ENCODE measurements at regions of chr5 and their contacts with region 1.

Region 1: DNA sequence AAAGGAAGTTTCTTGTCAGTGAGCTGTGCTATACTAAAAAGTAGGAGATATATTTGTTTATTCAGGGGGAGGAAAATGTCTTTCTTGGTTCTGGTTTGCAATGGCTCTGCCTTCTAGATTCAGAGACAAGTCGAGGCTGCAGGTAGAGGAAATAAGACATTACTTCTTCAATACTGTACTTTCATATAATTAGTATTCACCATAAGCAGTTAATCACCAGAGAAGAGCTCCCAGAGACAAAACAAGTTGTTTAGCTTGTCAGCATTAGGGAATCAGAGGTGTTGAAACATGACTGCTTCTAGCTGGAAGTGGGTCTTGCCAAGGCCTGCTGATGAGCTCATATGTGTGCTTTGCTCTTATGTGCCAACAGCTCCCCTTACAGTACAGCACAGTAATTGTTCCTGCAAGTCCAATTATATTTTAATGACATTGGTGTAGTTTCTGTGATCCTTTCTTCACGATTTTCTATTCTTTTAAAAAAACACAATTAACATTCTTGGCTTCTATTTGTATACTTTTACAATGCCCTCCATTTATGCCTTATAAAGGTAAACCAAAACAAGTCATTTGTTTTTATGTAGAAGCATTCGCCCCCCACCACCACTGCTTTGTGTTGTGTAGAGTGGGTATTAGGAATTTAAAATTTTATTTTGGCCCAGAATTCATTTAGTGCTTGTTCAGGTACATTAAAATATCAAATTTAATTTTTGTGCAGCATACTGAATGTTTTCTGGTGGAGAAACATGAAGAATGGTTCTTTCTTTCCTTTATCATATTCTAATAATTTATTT is 112.2 kb downstream of the RPS23 start:
- DNase-seq: peak in 9 of 10 donors; percentile 23 to 86 (median 59)

Region 2: DNA sequence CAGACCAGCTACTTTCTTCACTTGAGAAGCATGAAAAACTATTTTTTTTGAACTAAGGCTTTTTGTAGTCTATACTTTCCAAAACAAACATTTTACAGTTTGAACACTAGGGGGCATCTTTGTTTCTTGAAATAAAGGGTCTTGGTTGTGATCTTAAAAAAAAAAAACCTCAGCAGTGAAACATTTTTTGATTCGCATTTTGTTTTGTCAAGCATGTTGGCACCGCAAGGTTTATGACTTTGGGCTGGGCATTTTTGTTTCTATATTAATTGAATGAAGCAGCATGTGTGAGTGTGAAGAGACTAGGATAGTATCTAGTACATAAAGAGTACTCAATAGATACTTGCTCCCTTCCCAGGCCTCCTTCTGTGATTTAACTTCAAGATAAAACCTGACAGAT is 740.4 kb before region 1 on chr5:
- intact Hi-C with region 1: loop called (anchors 5 kb)
- DNase-seq: no peak

Region 3: DNA sequence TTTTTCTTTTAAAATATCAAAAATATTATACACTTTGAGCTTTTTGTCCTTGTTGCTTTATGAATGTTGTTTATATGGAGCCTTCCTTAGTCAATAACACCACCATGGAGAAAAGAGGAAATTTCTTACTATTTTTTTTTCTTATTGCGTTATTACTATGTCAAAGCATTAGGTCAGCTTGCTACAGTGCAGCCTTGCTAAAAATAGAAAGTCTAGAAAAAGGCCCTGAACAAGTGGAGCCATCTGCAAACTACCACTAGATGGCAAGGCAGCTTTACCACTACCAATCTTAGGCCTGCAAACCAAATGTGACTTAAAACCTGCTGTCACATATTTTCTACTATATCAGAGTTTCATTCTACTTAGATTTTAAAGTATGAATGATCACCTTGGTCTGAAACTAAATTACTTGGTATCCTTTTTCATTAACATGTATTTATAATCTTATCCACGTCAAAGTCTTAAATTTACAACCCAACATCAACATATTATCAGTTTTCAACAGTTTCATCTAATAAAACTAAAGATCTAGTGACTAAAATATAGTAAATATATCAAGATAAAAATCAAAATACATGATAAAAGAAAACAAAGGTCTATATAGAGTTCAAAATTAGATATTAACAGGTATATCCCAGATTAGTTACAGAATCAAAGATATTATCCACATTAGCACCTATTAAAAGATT is 658.9 kb before region 1 on chr5:
- intact Hi-C with region 1: loop called (anchors 5 kb)
- DNase-seq: peak in 4 of 10 donors; percentile 34 to 50 (median 42)

Region 4: GRCh38 chr5:81751009-81751835 is 414.7 kb before region 1 on chr5 and contains the start of gene SSBP2:
- intact Hi-C with region 1: loop called (anchors 5 kb)
- DNase-seq: peak; percentile 99 to 100 (median 100)

Region 5: GRCh38 chr5:81856948-81857928 is 308.7 kb before region 1 on chr5:
- intact Hi-C with region 1: loop called (anchors 5 kb)
- DNase-seq: peak; percentile 52 to 96 (median 74)

Region 6: DNA sequence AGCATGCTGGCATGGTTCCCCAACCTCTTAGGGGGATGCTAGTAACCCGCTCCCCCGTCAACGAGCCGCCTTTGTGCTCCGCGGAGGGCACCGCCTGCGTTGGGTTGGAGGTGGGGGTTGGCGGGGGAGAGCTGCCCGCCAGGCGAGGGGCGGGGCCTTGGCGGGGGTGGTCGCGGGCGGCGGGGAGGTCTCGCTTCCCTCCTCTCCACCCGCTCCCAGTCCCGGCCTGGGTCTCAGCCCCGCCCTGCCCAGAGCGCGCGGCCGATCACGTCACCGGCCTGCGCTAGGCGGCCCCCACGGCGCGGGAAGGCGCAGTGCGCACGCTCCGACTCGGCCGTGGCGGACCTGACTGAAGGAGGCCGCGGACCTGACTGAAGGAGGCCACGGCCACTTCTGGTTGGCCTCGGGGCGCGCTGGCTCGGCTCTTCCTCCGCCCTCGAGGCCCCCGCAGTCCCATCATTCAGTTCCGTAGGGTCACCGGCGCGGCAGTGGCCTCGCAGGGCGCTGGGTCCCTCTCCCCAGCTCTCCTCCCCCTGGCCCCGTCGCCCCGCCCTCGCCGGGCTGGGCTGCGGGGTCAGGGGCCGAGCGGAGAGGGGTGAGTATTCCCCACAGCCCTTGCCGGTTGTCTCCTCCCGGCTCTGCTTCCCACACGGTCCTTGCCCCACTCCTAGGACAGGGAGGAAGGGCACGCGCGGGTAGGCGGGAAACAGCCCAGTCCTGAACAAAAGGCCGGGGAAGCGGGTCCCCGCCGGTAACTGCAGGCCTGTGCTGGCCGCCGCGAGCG is 194.0 kb before region 1 on chr5 and contains the start of gene ATG10:
- intact Hi-C with region 1: loop called (anchors 5 kb)
- DNase-seq: peak; percentile 86 to 99 (median 92)

Region 7: DNA sequence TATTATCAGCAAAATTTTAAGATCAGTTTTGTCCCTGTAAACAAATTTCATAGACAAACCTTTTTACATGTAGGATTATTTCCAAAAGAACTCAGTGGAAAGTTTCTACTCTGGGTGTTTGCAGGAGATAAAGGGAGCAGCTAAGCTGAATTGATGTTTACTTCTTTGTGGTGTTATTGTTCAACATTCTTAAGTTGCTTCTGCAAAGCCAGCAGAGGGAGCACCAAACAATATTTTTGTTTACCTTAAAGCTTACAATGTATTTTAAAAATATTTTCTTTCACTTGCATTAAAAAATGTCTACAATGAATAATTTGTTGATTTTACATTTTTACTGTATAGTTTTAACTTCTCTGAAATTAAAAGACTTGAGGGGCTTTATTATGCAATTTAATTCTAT is 58.7 kb before region 1 on chr5:
- intact Hi-C with region 1: loop called (anchors 5 kb)
- DNase-seq: no peak

Region 8: DNA sequence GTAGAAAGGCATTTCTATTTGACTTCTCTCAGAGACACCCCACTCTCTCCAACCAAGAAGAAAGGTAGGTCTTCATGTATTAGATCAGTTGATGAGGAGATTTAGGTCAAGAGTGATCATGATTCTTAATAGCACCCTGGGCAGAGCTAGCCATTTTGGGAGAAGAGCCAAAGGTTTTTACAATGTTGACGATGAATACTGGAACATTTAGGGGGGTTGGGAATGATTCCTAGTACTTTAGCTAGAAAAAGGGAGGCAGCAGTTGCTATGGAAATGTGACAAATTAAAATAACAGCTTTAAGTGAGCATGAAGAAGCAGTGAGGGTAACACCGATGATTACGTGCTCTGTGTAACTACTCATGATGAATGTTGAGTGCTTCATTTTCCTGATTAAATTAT is 121.7 kb after region 1 on chr5:
- intact Hi-C with region 1: no loop called
- DNase-seq: no peak